GM12878 (cell line): ENCODE measurements at regions of chr14 and their contacts with region 1.

Region 1: DNA sequence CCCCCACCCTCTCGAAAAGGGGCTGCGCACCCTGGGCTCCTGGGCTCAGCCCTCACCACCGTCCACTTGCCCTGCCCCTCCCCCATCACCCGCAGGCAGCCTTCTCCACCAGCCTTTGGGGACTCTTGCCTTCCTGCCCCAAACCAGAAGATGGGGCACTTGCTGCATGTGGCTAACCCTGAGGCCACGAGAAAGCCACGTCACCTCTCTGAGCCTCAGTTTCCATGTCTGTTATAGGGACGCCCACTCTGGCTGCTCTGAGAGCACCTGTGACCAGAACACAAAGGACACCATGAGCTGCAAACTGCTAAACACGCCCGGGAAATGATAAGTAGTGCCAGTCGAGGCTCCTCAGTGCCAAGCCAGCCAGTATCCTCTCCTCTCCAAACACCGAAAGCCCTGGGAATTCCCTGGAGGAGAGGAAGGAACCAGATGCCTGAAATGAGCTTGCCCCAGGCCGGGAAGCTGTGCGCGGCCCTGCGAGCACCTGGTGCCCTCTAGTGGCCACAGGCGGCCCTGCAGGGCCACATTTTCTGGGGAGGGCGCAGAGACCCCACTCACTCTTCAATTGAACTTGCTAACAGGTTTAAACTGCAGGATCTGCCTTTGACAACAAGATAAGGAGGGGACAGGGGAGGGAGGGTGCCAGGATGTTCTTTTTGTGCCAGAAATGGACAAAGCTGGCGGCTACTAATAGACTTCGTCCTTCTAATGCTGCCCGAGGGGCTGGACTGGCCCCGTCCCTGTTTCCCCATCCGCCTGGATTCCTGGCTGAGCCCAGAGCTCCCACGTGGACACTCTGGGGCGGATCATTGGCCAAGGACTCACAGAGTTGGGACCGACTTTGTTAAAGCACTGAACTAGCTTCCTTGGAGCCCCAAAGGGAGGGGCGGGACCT is 10.2 kb upstream of the SERPINA9 start:
- DNase-seq: no peak
- ATAC-seq: peak; percentile 64
- H3K4me3 ChIP-seq: no peak overlapping the region
- H3K27ac ChIP-seq: no peak overlapping the region
- H3K4me1 ChIP-seq: peaks cover 10% of the 10 kb centered on the region
- H3K27me3 ChIP-seq: peaks cover 0 to 2% of the 10 kb centered on the region in 2 experiments; a peak in 1 of 4 replicates
- CTCF ChIP-seq: peak; percentile 98 to 99 (median 99); a peak in 5 of 6 replicates
- EP300 ChIP-seq: no peak
- POLR2A ChIP-seq: no peak
- RAD21 ChIP-seq: peak; percentile 80

Region 2: DNA sequence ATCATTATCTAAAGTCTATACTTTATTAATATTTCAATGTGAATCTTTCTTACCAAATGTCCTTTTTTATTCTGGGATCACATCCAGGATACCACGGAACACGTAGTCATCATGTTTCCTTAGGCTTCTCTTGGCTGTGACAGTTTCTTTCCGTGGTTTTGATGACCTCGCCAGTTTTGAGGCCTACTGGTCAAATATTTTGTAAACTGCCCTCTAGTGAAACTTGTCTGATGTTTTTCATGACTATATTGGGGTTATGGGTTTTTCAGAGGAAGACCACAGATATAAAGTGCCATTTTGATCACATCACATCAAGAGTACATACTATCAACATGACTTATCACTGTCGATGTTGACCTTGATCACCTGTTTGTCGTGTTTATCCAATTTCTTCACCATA is 148.9 kb before region 1 on chr14:
- CTCF ChIA-PET with region 1: no interaction called
- POLR2A ChIA-PET with region 1: no interaction called
- RAD21 ChIA-PET with region 1: no interaction called
- SMC1A ChIA-PET with region 1: no interaction called
- in situ Hi-C with region 1: no loop called
- intact Hi-C with region 1: no loop called
- DNase-seq: no peak
- ATAC-seq: no peak
- H3K4me3 ChIP-seq: no peak overlapping the region
- H3K27ac ChIP-seq: no peak overlapping the region
- H3K4me1 ChIP-seq: peaks cover 3% of the 10 kb centered on the region; the same call in 1 of the 2 replicates
- H3K27me3 ChIP-seq: no peaks in the 10 kb centered on the region
- CTCF ChIP-seq: no peak
- EP300 ChIP-seq: no peak
- POLR2A ChIP-seq: no peak
- RAD21 ChIP-seq: no peak

Region 3: GRCh38 chr14:94423453-94424056 is 62.6 kb before region 1 on chr14:
- CTCF ChIA-PET with region 1: interaction called, 37 read pairs
- POLR2A ChIA-PET with region 1: no interaction called
- RAD21 ChIA-PET with region 1: interaction called, 9 read pairs
- SMC1A ChIA-PET with region 1: interaction called, 5 read pairs
- in situ Hi-C with region 1: no loop called
- intact Hi-C with region 1: loop called (anchors 1 kb)
- DNase-seq: peak; percentile 24
- ATAC-seq: peak; percentile 88
- H3K4me3 ChIP-seq: no peak overlapping the region
- H3K27ac ChIP-seq: no peak overlapping the region
- H3K4me1 ChIP-seq: no peaks in the 10 kb centered on the region
- H3K27me3 ChIP-seq: peaks cover 0 to 1% of the 10 kb centered on the region in 2 experiments; a peak in 3 of 4 replicates
- CTCF ChIP-seq: peak; percentile 69 to 85 (median 72)
- EP300 ChIP-seq: no peak
- POLR2A ChIP-seq: no peak
- RAD21 ChIP-seq: peak; percentile 49

Region 4: GRCh38 chr14:94428610-94429009 is 57.6 kb before region 1 on chr14:
- CTCF ChIA-PET with region 1: interaction called, 95 read pairs
- POLR2A ChIA-PET with region 1: no interaction called
- RAD21 ChIA-PET with region 1: interaction called, 29 read pairs
- SMC1A ChIA-PET with region 1: interaction called, 52 read pairs
- in situ Hi-C with region 1: no loop called
- intact Hi-C with region 1: loop called (anchors 1 kb)
- DNase-seq: no peak
- ATAC-seq: no peak
- H3K4me3 ChIP-seq: no peak overlapping the region
- H3K27ac ChIP-seq: no peak overlapping the region
- H3K4me1 ChIP-seq: no peaks in the 10 kb centered on the region
- H3K27me3 ChIP-seq: peaks cover 0 to 1% of the 10 kb centered on the region in 2 experiments; a peak in 3 of 4 replicates
- CTCF ChIP-seq: no peak
- EP300 ChIP-seq: no peak
- POLR2A ChIP-seq: no peak
- RAD21 ChIP-seq: no peak

Region 5: DNA sequence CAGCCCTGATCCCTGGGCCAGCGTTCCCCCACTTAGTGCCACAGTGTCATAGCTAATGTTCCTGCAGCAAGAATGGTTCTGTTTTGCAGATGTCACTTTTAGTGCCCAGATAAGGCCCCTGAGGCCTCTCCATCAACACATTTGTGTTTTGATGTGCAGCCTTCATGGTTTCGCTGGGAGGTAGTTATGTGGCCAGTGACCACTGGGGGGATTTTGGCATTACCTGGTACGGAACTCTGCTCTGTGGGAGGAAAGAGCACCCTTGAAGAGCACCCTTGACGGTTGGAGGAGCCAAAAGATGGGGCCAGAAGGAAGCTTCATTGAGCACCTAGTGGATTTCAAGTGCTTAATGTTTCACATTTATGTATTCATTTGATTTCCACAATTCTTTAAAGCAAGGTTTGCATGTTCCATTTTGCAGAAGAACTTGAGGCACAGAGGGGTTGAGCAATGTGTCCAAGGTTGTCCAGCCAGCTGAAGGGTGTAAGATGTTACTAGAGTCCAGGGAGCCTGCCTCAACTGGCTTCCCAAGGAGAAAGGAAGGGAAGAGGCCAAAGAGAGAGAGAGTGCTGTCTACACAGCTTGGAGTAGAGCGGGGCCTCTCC is 46.6 kb before region 1 on chr14:
- CTCF ChIA-PET with region 1: interaction called, 95 read pairs
- POLR2A ChIA-PET with region 1: no interaction called
- RAD21 ChIA-PET with region 1: interaction called, 29 read pairs
- SMC1A ChIA-PET with region 1: interaction called, 3 read pairs
- in situ Hi-C with region 1: no loop called
- intact Hi-C with region 1: loop called (anchors 1 kb)
- DNase-seq: no peak
- ATAC-seq: peak; percentile 44; the same call in 2 of the 3 replicates
- H3K4me3 ChIP-seq: no peak overlapping the region
- H3K27ac ChIP-seq: no peak overlapping the region
- H3K4me1 ChIP-seq: no peaks in the 10 kb centered on the region
- H3K27me3 ChIP-seq: no peaks in the 10 kb centered on the region
- CTCF ChIP-seq: peak in 2 of 3 experiments; percentile 12 to 16; a peak in 1 of 6 replicates
- EP300 ChIP-seq: no peak
- POLR2A ChIP-seq: no peak
- RAD21 ChIP-seq: no peak

Region 6: GRCh38 chr14:94474581-94475031 is 11.6 kb before region 1 on chr14:
- CTCF ChIA-PET with region 1: interaction called, 40 read pairs
- POLR2A ChIA-PET with region 1: no interaction called
- RAD21 ChIA-PET with region 1: no interaction called
- SMC1A ChIA-PET with region 1: interaction called, 3 read pairs
- in situ Hi-C with region 1: no loop called
- intact Hi-C with region 1: no loop called
- DNase-seq: no peak
- ATAC-seq: no peak
- H3K4me3 ChIP-seq: no peak overlapping the region
- H3K27ac ChIP-seq: no peak overlapping the region
- H3K4me1 ChIP-seq: no peaks in the 10 kb centered on the region
- H3K27me3 ChIP-seq: peaks cover 1 to 3% of the 10 kb centered on the region in 2 experiments; a peak in 1 of 4 replicates
- CTCF ChIP-seq: no peak
- EP300 ChIP-seq: no peak
- POLR2A ChIP-seq: no peak
- RAD21 ChIP-seq: no peak